ENCODE measurements at regions of chrX and their contacts with region 1.

Region 1: GRCh38 chrX:130186651-130187050 is 14.9 kb downstream of the RAB33A start:
- DNase-seq: no peak
- H3K4me3 ChIP-seq: no peak overlapping the region
- H3K4me3 Mint-ChIP-seq: no peak overlapping the region
- H3K27ac ChIP-seq: no peak overlapping the region
- H3K27ac Mint-ChIP-seq: peak overlapping the region in 3 of 7 donors; percentile 10 to 84 (median 60)
- H3K4me1 ChIP-seq: peaks cover 15% of the 10 kb centered on the region
- H3K4me1 Mint-ChIP-seq: peaks cover 5 to 15% (median 8%) of the 10 kb centered on the region in 4 donors
- H3K27me3 ChIP-seq: no peaks in the 10 kb centered on the region
- H3K27me3 Mint-ChIP-seq: no peaks in the 10 kb centered on the region

Region 2: DNA sequence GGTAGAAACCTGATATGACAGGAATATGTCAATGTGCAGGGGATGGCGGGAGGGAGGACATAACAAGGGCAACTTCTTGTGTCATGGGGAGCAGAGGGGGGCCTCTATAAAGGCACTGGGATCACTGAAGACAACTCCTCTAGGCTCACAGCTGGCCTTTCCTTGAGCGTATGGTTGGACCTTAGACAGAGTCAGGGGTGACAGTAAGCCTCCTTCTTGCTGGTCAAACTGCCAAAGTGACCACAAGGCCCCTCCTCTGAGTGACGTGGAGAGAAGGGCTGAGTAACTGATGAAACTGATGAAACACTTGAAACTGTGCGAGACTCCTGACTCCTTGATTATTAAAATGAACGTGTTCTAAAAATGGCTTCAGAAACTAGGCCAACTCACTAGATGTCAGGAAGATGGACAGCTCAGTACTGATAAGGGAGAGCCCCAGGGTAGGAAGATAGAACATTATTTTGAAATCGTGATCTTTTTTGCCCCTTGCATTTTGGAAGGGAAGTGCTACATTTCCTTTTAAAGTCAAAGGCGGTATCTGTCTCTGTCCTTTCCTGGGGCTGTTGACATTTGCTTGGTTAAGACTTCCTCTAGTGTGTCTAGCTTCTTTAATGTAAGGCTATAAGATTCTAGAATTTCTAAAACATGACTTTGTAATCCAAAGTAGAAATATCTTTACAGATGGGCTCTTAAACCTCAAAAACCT is 13.3 kb before region 1 on chrX:
- CTCF ChIA-PET with region 1: interaction called, 14 read pairs
- POLR2A ChIA-PET with region 1: interaction called, 28 read pairs
- intact Hi-C with region 1: no loop called
- DNase-seq: no peak
- H3K4me3 ChIP-seq: peak overlapping the region; percentile 12 to 58
- H3K4me3 Mint-ChIP-seq: peak overlapping the region; percentile 87 to 93 (median 92)
- H3K27ac ChIP-seq: peak overlapping the region; percentile 61
- H3K27ac Mint-ChIP-seq: peak overlapping the region; percentile 63 to 93 (median 87)
- H3K4me1 ChIP-seq: peaks cover 39% of the 10 kb centered on the region
- H3K4me1 Mint-ChIP-seq: peaks cover 23 to 67% (median 32%) of the 10 kb centered on the region in 4 donors
- H3K27me3 ChIP-seq: no peaks in the 10 kb centered on the region
- H3K27me3 Mint-ChIP-seq: no peaks in the 10 kb centered on the region

Region 3: DNA sequence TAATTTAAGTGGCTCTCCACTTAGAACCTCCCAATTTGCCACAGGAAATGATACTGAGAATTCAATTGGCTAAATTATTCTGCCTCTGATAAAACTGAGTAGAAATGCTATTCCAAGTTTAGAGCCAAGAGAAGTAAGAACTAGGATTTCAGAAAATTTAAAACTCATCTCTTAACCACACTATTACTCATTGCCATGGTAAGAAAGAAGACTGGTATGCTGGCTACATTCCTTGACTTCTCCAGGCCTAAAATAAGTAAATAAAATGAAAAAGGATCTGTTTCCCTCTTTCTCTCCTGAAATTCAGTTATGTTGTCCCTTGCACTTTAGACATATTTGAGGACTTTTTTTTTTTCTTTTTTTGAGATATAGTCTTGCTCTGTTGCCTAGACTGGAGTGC is 58.8 kb after region 1 on chrX:
- CTCF ChIA-PET with region 1: no interaction called
- POLR2A ChIA-PET with region 1: no interaction called
- intact Hi-C with region 1: no loop called
- DNase-seq: no peak
- H3K4me3 ChIP-seq: no peak overlapping the region
- H3K4me3 Mint-ChIP-seq: no peak overlapping the region
- H3K27ac ChIP-seq: no peak overlapping the region
- H3K27ac Mint-ChIP-seq: no peak overlapping the region
- H3K4me1 ChIP-seq: no peaks in the 10 kb centered on the region
- H3K4me1 Mint-ChIP-seq: peaks cover 5 to 9% (median 9%) of the 10 kb centered on the region in 4 donors
- H3K27me3 ChIP-seq: no peaks in the 10 kb centered on the region
- H3K27me3 Mint-ChIP-seq: no peaks in the 10 kb centered on the region